Activated CD4-positive, alpha-beta T cell treated with anti-CD3 and anti-CD28 coated beads for 36 hours (primary cell): ENCODE measurements at regions of chr19 and their contacts with region 1.

Region 1: DNA sequence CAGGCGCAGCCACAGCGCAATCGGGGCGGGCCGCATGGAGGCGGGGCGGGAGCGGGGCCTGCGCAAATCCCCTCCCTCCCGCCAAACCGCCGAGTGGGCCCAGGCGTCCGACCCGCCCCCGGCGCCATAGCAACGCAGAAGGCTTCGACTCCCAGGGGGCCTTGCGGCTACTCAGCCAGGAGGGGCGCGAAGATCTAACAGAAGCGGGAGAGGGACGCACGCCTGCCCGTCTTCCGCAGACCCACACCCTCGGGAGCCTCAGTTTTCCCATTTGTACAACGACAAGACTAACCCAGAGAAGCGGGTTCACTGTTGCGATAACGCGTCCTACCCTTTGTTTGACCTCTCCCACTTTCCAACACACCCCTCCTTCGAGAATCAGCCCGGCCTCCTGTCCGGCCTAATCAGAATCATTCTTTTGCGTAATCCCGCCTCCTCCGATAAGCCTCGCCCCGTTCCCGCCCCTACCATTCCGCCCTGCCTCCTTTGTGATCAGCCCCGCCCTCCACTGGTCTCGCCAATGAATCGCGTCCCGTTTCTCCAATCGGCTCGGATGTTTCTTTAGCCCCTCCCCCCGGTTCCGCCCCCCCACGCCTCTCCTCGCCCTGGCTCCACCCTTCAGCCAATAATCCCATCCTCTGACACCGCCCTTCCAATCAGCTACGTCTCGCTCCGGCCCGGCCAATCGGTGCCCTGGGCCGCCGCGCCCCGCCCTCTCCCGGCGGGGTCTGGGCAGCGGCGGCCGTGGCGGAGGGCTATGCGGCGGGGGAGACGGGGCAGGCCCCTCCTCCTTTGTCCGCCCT is at the start of gene PCSK4:
- DNase-seq: peak; percentile 99
- ATAC-seq: peak; percentile 92
- H3K4me3 Mint-ChIP-seq: peak within 1 kb of the TSS; percentile 72
- H3K27ac Mint-ChIP-seq: peak within 1 kb of the TSS; percentile 66
- H3K4me1 Mint-ChIP-seq: peaks cover 9% of the 10 kb centered on the region
- H3K27me3 Mint-ChIP-seq: peaks cover 3% of the 10 kb centered on the region
- total RNA-seq, gene PCSK4: 1.8 to 3.9 TPM

Region 2: DNA sequence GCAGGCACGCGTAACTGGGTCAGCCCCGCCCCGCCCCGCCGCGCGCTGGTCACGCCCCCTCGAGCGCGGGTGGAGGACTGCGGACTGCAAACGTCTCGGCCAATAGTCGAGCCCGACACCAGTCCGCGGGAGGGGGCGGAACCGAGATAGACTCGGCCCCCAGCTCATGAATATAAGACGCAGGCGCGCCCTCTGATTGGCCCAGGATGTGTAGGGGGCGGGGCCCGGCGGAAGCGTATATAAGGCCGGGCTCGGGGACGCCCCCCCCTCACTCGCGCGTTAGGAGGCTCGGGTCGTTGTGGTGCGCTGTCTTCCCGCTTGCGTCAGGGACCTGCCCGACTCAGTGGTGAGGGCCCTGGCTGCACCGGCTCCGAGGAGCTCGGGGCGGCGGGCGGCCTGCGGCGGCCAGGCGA is 221.4 kb before region 1 on chr19 and contains the start of gene CIRBP:
- CTCF ChIA-PET with region 1: no interaction called
- POLR2A ChIA-PET with region 1: interaction called, 7 read pairs
- intact Hi-C with region 1: loop called in 1 of 2 experiments (anchors 1 kb)
- DNase-seq: peak; percentile 100
- ATAC-seq: peak; percentile 87
- H3K4me3 Mint-ChIP-seq: peak within 1 kb of the TSS; percentile 84
- H3K27ac Mint-ChIP-seq: peak within 1 kb of the TSS; percentile 87
- H3K4me1 Mint-ChIP-seq: peaks cover 66% of the 10 kb centered on the region
- H3K27me3 Mint-ChIP-seq: no peaks in the 10 kb centered on the region
- total RNA-seq, gene CIRBP: 123 to 188 TPM

Region 3: DNA sequence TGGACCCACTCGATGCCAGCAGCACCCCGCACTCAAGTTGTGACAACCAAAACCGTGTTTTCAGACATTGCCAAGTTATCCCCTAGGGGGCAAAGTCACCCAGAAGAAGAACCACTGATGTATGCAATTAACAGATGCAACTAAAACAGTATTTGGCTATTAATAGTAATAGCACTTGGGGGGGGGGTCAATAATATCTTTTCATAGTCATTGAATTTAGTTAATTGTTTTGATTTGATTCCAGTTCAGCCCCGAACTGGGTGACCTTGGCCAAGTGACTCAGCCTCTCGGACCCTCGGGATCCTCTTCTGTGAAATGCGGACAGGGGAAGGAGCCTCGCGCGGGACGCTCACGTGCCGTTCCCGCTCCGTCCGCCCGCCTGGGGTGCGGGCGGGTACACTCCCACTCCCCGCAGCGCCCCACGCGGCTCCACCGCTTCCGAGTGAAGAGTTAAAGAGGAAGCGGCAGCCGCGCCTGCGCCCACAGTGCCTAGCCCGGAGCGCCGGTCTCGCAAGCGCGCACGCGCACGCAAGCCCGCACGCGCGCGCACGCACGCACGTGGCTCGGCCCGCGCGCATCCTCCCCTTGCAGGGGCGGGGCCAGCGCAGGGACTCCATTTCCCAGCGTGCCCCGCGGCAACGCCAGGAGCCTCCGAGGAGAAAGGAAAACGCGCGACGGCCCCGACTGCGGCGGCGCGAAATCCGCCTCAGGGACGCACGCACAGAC is 83.6 kb before region 1 on chr19:
- CTCF ChIA-PET with region 1: no interaction called
- POLR2A ChIA-PET with region 1: no interaction called
- intact Hi-C with region 1: loop called in 1 of 2 experiments (anchors 1 kb)
- DNase-seq: peak; percentile 99
- ATAC-seq: peak; percentile 83
- H3K4me3 Mint-ChIP-seq: peak overlapping the region; percentile 65
- H3K27ac Mint-ChIP-seq: peak overlapping the region; percentile 72
- H3K4me1 Mint-ChIP-seq: peaks cover 43% of the 10 kb centered on the region
- H3K27me3 Mint-ChIP-seq: peaks cover 2% of the 10 kb centered on the region

Region 4: GRCh38 chr19:1453525-1454371 is 36.8 kb before region 1 on chr19:
- CTCF ChIA-PET with region 1: no interaction called
- POLR2A ChIA-PET with region 1: no interaction called
- intact Hi-C with region 1: no loop called
- DNase-seq: peak; percentile 46
- ATAC-seq: no peak
- H3K4me3 Mint-ChIP-seq: no peak overlapping the region
- H3K27ac Mint-ChIP-seq: no peak overlapping the region
- H3K4me1 Mint-ChIP-seq: peaks cover 15% of the 10 kb centered on the region
- H3K27me3 Mint-ChIP-seq: peaks cover 50% of the 10 kb centered on the region

Region 5: DNA sequence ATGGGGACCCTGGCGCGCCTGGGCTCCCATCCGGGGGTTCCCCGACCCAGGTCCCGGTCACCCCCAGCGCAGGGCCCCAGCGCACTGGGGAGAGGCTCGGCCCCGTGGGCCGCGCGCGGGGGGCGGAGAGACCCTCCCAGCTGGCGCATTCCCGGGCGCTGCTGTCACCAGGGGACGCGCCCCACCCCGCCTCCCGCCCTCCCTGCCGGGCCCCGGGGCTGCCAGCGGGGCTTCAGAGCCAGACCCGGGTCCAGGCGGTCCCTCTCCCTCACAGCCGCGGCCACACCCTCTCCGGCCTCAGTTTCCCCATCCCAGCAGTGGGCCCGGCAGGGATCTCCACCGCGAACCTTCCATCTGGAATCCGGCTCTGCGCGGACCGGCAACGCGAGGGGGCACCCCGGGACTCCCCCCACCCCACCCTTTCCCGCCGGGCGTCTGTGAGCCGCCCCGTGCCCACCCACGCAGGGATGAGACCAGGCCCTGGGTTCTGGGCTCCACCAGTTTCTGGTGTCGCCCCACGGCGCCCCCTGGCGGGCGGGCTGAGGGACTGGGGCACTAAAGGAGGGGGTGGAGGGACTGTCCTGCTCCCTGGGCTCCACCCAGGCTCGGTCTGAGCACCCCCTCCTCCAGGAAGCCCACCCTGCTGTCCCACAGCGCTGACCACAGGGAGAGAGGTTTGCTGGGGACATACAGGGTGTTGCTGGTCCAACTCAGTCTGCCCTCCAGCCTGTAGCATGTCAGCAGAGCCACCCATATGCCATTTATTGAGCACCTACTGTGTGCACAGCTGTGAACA is 23.2 kb after region 1 on chr19:
- CTCF ChIA-PET with region 1: no interaction called
- POLR2A ChIA-PET with region 1: no interaction called
- intact Hi-C with region 1: loop called in 1 of 2 experiments (anchors 1 kb)
- DNase-seq: peak; percentile 88
- ATAC-seq: peak; percentile 60
- H3K4me3 Mint-ChIP-seq: no peak overlapping the region
- H3K27ac Mint-ChIP-seq: no peak overlapping the region
- H3K4me1 Mint-ChIP-seq: peaks cover 7% of the 10 kb centered on the region
- H3K27me3 Mint-ChIP-seq: no peaks in the 10 kb centered on the region

Region 6: GRCh38 chr19:1652471-1653299 is 162.2 kb after region 1 on chr19 and contains the start of gene TCF3:
- CTCF ChIA-PET with region 1: no interaction called
- POLR2A ChIA-PET with region 1: no interaction called
- intact Hi-C with region 1: loop called in 1 of 2 experiments (anchors 1 kb)
- DNase-seq: peak; percentile 99
- ATAC-seq: peak; percentile 94
- H3K4me3 Mint-ChIP-seq: peak within 1 kb of the TSS; percentile 88
- H3K27ac Mint-ChIP-seq: peak within 1 kb of the TSS; percentile 91
- H3K4me1 Mint-ChIP-seq: peaks cover 32% of the 10 kb centered on the region
- H3K27me3 Mint-ChIP-seq: no peaks in the 10 kb centered on the region
- total RNA-seq, gene TCF3: 115 to 133 TPM

Region 7: DNA sequence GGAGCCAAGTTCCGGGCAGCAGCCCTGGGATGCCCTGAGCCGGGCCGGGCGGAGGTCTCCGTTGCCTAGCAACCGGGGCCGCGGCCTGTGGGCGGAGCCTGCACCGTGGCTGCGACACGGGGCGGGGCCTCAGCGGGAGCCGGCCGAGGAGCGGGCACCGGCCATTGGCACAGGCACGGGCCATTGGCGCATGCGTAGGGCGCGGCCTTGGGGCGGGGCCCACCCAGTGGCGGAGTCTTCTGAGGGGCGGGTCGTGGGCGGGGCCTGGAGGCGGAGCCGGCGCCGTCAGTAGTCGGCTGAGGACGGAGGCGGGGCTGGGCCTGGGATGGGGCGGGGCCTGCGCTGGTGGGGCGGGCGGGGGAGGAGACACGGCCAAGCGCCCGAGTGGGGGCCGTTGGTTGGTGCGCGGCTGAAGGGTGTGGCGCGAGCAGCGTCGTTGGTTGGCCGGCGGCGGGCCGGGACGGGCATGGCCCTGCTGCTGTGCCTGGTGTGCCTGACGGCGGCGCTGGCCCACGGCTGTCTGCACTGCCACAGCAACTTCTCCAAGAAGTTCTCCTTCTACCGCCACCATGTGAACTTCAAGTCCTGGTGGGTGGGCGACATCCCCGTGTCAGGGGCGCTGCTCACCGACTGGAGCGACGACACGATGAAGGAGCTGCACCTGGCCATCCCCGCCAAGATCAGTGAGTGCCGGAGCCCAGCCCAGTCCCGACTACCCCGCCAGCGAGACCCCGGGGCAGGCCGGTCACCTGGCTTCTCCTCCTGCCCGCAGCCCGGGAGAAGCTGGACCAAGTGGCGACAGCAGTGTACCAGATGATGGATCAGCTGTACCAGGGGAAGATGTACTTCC is 606.2 kb after region 1 on chr19 and contains the start of gene IZUMO4:
- CTCF ChIA-PET with region 1: no interaction called
- POLR2A ChIA-PET with region 1: no interaction called
- intact Hi-C with region 1: loop called in 1 of 2 experiments (anchors 1 kb)
- DNase-seq: peak; percentile 100
- ATAC-seq: peak; percentile 85
- H3K4me3 Mint-ChIP-seq: peak within 1 kb of the TSS; percentile 98
- H3K27ac Mint-ChIP-seq: peak within 1 kb of the TSS; percentile 94
- H3K4me1 Mint-ChIP-seq: peaks cover 35% of the 10 kb centered on the region
- H3K27me3 Mint-ChIP-seq: no peaks in the 10 kb centered on the region
- total RNA-seq, gene IZUMO4: 15.2 to 16.6 TPM